A673 (cell line): ENCODE measurements at regions of chr12 and their contacts with region 1.

Region 1: DNA sequence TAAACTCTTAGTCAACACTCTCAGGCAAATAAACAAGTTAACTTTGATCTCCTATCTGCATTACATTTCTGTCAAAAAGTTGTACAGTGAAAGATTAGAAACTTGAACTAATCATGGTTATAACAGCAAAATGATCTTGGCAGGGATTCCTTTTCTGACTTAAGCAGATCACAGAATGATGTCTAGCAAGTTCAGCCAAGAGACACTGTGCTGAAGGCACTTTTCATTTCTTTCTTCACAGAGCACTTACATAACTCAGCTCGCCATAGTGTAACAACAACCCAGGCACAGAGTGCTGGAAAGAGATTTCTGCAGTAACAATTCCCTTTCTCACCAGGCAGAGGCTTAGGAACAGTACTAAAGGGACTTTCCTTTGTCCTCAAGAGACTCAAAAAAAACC is 19.6 kb upstream of the CSRP2 start:
- DNase-seq: no peak
- H3K4me3 ChIP-seq: no peak overlapping the region
- H3K27ac ChIP-seq: no peak overlapping the region
- H3K4me1 ChIP-seq: peaks cover 26% of the 10 kb centered on the region
- H3K27me3 ChIP-seq: no peaks in the 10 kb centered on the region
- CTCF ChIP-seq: no peak

Region 2: DNA sequence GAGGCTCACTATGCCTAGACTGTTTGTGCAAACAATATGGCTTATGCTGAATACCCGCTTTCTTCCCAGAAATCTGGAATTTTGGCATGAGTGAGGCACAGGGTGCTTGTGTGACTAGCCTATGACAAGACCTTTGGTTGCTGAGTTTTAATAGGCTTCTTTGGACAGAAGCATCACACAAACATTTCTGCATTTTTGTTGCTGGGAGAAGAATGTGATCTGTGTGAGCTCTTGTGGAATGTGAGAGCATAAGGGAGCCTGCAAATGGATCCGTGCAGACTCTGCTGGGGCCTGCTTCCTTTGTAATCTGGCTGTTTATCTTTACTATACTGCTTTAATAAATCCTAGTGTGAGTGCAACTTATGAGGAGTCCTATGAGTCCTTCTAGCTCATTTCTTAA is 217.5 kb before region 1 on chr12:
- CTCF ChIA-PET with region 1: no interaction called
- POLR2A ChIA-PET with region 1: no interaction called
- intact Hi-C with region 1: no loop called
- DNase-seq: no peak
- H3K4me3 ChIP-seq: no peak overlapping the region
- H3K27ac ChIP-seq: no peak overlapping the region
- H3K4me1 ChIP-seq: peaks cover 11% of the 10 kb centered on the region
- H3K27me3 ChIP-seq: no peaks in the 10 kb centered on the region
- CTCF ChIP-seq: no peak

Region 3: GRCh38 chr12:76859611-76860010 is 38.8 kb before region 1 on chr12:
- CTCF ChIA-PET with region 1: no interaction called
- POLR2A ChIA-PET with region 1: interaction called, 12 read pairs
- intact Hi-C with region 1: no loop called
- DNase-seq: no peak
- H3K4me3 ChIP-seq: no peak overlapping the region
- H3K27ac ChIP-seq: no peak overlapping the region
- H3K4me1 ChIP-seq: no peaks in the 10 kb centered on the region
- H3K27me3 ChIP-seq: no peaks in the 10 kb centered on the region
- CTCF ChIP-seq: no peak

Region 4: DNA sequence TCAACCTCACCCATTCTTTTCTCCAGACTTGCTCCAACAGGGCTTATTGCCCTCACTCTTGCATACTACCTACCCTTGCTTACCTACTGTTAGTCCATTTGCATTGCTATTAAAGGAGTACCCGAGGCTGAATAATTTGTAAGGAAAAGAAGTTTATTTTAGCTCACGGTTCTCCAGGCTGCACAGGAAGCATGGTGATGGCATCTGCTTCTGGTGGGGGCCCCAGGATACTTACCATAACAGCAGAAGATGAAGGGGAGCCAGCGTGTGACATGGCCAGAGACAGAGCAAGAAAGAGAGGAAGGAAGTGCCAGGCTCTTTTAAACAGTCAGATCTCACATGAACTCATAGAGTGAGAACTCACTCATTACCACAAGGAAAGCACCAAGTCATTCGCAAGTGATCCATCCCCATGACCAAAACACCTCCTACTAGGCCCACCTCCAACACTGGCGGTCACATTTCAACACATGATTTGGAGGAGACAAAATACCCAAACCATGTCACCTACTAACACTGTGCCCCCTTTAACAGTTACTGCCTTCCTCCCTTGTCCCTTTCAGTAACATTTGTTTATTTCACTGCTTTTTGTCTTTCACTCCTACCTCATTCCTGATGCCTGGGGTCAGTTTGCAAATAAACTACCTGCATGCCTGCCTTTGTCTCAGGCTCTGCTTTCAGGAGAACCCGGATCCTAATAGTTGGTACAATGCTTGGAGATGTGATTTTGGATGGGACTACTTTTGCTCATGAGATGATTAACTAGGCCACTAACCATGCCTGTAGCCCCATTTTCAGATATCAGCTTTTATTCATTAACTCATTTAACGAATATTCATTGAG is 22.0 kb after region 1 on chr12:
- CTCF ChIA-PET with region 1: interaction called, 12 read pairs
- POLR2A ChIA-PET with region 1: no interaction called
- intact Hi-C with region 1: no loop called
- DNase-seq: no peak
- H3K4me3 ChIP-seq: no peak overlapping the region
- H3K27ac ChIP-seq: no peak overlapping the region
- H3K4me1 ChIP-seq: no peaks in the 10 kb centered on the region
- H3K27me3 ChIP-seq: no peaks in the 10 kb centered on the region
- CTCF ChIP-seq: no peak